ENCODE measurements at regions of chrX and their contacts with region 1.

Region 1: GRCh38 chrX:54044126-54044876 is at the start of gene PHF8:
- DNase-seq: peak; percentile 89 to 97 (median 94)
- ATAC-seq: peak; percentile 84
- H3K4me3 ChIP-seq: peak within 1 kb of the TSS; percentile 75
- H3K4me3 Mint-ChIP-seq: peak within 1 kb of the TSS; percentile 96
- H3K27ac ChIP-seq: peak within 1 kb of the TSS; percentile 89 to 90
- H3K27ac Mint-ChIP-seq: peak within 1 kb of the TSS; percentile 99
- H3K4me1 ChIP-seq: peaks cover 13% of the 10 kb centered on the region
- H3K4me1 Mint-ChIP-seq: peaks cover 29% of the 10 kb centered on the region
- H3K27me3 ChIP-seq: no peaks in the 10 kb centered on the region
- H3K27me3 Mint-ChIP-seq: no peaks in the 10 kb centered on the region
- CTCF ChIP-seq: no peak
- total RNA-seq, gene PHF8: 46.1 to 49.9 TPM

Region 2: GRCh38 chrX:53422086-53422860 is 622.0 kb before region 1 on chrX and contains the start of gene SMC1A:
- CTCF ChIA-PET with region 1: no interaction called
- POLR2A ChIA-PET with region 1: interaction called, 13 read pairs
- intact Hi-C with region 1: no loop called
- DNase-seq: peak; percentile 85 to 99 (median 95)
- ATAC-seq: peak; percentile 87
- H3K4me3 ChIP-seq: peak within 1 kb of the TSS; percentile 93
- H3K4me3 Mint-ChIP-seq: peak within 1 kb of the TSS; percentile 99
- H3K27ac ChIP-seq: peak within 1 kb of the TSS; percentile 90 to 98
- H3K27ac Mint-ChIP-seq: peak within 1 kb of the TSS; percentile 90
- H3K4me1 ChIP-seq: peaks cover 34% of the 10 kb centered on the region
- H3K4me1 Mint-ChIP-seq: peaks cover 28% of the 10 kb centered on the region
- H3K27me3 ChIP-seq: no peaks in the 10 kb centered on the region
- H3K27me3 Mint-ChIP-seq: no peaks in the 10 kb centered on the region
- CTCF ChIP-seq: no peak
- total RNA-seq, gene SMC1A: 25.5 to 28.6 TPM

Region 3: DNA sequence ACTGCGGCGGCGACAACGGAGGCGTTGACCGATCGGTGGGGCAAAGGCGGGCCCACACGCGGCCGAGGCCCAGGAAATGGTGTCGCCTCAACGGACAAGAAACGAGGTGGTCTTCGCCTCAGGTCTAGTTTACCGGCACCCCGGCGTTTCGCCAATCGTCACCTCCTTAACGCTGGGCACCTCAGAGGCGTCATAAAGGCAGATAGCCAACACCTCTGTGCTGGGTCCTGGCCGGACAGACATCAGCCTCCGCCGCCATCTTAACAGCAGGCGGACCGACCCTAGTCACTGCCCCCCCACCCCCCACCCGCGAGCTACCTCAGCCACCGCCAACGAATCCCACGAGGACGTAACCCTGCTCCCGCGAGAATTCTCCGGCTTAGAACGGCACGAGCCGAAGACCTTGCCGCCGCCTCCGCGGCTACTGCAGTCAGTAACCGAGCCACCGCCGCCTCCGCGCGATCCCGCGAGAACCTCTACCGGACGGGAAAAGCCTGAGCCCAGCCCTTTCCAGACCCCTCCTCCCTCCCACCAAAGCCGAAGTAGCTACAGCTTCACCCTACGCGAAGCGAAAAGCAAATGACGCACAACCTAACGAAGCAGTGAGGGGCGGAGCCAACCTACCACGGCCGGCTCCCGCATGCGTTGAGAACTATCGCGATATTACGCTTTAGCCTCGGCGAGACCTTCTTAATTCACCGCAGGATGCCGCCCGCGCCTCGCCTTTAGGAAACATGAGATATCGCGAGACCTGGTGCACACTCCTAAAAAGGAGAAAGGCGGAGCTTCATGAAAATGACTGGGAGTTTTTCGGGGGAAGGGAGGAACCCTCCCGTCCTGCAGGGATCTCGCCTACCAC is 360.5 kb before region 1 on chrX:
- CTCF ChIA-PET with region 1: no interaction called
- POLR2A ChIA-PET with region 1: interaction called, 46 read pairs
- intact Hi-C with region 1: loop called (anchors 1 to 2 kb)
- DNase-seq: peak; percentile 77 to 98 (median 86)
- ATAC-seq: peak; percentile 78
- H3K4me3 ChIP-seq: peak overlapping the region; percentile 90
- H3K4me3 Mint-ChIP-seq: peak overlapping the region; percentile 95
- H3K27ac ChIP-seq: peak overlapping the region; percentile 75 to 98
- H3K27ac Mint-ChIP-seq: peak overlapping the region; percentile 99
- H3K4me1 ChIP-seq: peaks cover 18% of the 10 kb centered on the region
- H3K4me1 Mint-ChIP-seq: peaks cover 63% of the 10 kb centered on the region
- H3K27me3 ChIP-seq: no peaks in the 10 kb centered on the region
- H3K27me3 Mint-ChIP-seq: no peaks in the 10 kb centered on the region
- CTCF ChIP-seq: no peak

Region 4: GRCh38 chrX:53950130-53950733 is 94.1 kb before region 1 on chrX:
- CTCF ChIA-PET with region 1: no interaction called
- POLR2A ChIA-PET with region 1: no interaction called
- intact Hi-C with region 1: no loop called
- DNase-seq: no peak
- ATAC-seq: no peak
- H3K4me3 ChIP-seq: no peak overlapping the region
- H3K4me3 Mint-ChIP-seq: no peak overlapping the region
- H3K27ac ChIP-seq: no peak overlapping the region
- H3K27ac Mint-ChIP-seq: no peak overlapping the region
- H3K4me1 ChIP-seq: no peaks in the 10 kb centered on the region
- H3K4me1 Mint-ChIP-seq: no peaks in the 10 kb centered on the region
- H3K27me3 ChIP-seq: no peaks in the 10 kb centered on the region
- H3K27me3 Mint-ChIP-seq: no peaks in the 10 kb centered on the region
- CTCF ChIP-seq: no peak

Region 5: DNA sequence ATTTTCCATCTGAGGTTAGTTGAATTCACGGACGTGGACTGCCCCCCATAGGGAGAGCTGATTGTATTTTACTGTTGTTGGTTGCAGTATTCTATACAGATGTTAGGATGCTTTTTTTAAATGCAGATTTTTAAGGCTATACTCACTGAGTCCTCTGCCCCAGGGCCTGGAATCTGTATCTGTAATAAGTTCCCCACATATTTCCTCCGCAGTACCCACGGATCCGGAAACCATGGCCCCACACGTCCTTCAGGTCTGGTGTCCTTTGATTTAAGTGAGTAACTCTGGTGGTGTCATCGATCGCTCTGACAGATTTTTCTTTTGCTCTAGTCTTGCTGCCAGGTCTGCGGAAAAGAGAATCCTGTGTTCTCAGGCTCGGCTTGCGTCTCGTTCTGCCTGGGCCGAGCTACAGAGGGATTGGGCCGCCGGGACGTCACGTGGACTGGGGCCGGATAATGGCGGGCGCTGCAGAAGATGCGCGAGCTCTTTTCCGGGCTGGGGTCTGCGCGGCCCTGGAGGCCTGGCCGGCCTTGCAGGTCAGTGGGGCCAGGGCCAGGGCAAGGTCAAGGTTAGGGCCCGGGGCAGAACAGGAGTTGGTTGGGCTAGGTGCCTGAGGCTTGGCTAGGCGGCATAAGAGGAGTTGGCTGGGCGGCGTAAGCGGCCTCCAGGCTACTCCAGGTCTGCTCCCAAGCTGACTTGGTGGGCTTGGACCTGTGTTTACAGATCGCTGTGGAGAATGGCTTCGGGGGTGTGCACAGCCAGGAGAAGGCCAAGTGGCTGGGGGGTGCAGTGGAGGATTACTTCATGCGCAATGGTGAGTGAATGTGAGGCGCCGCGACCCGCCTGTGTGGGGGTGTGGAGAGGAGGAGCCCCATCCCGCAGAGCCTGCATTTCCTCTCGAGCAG is 395.9 kb after region 1 on chrX and contains the start of gene TSR2:
- CTCF ChIA-PET with region 1: no interaction called
- POLR2A ChIA-PET with region 1: interaction called, 11 read pairs
- intact Hi-C with region 1: loop called in 1 of 2 experiments (anchors 5 kb)
- DNase-seq: peak; percentile 58 to 90 (median 68)
- ATAC-seq: peak; percentile 96
- H3K4me3 ChIP-seq: peak within 1 kb of the TSS; percentile 87
- H3K4me3 Mint-ChIP-seq: peak within 1 kb of the TSS; percentile 95
- H3K27ac ChIP-seq: peak within 1 kb of the TSS; percentile 47 to 56
- H3K27ac Mint-ChIP-seq: peak within 1 kb of the TSS; percentile 85
- H3K4me1 ChIP-seq: peaks cover 25% of the 10 kb centered on the region
- H3K4me1 Mint-ChIP-seq: peaks cover 32% of the 10 kb centered on the region
- H3K27me3 ChIP-seq: no peaks in the 10 kb centered on the region
- H3K27me3 Mint-ChIP-seq: no peaks in the 10 kb centered on the region
- CTCF ChIP-seq: no peak
- total RNA-seq, gene TSR2: 36.3 to 36.5 TPM

Region 6: DNA sequence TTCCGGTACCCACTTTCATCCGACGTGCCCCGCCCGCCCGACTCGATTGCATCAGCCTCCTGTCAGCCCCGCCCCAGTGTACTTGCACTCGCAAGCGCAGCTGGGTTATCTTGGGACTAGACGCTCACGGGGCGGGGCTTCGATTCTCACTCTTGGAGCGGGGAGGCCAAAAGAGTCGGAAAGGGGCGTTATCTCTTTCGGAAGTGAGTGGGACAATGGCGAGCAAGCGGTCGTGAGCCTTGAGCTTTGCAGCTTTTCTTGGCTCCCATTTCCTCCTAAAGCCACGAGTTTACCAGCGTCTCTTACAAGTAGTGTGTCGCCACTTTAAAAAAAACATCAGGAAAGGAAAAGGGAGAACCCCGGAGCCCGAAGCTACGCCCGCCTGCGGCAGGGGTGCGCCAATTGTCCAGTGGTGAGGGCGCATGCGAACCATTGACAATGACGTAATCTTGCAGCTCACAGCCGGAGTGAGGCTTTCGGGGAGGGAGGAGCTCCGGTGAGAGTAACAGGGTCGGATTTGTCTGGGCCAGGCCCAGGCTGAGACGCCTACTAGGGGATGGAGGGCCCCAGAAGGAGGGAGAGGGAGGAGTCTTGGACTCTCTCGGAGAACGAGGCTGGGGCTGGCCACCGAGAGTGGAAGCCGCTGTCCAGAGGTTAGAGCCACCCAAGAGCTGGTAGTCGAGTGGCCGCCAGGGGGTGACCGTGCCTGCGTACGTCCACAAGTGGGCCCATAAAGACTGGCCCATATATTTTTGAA is 595.2 kb after region 1 on chrX:
- CTCF ChIA-PET with region 1: no interaction called
- POLR2A ChIA-PET with region 1: interaction called, 41 read pairs
- intact Hi-C with region 1: loop called (anchors 2 kb)
- DNase-seq: peak; percentile 82 to 96 (median 90)
- ATAC-seq: peak; percentile 88
- H3K4me3 ChIP-seq: peak overlapping the region; percentile 60
- H3K4me3 Mint-ChIP-seq: peak overlapping the region; percentile 94
- H3K27ac ChIP-seq: peak overlapping the region; percentile 93 to 95
- H3K27ac Mint-ChIP-seq: peak overlapping the region; percentile 98
- H3K4me1 ChIP-seq: peaks cover 14% of the 10 kb centered on the region
- H3K4me1 Mint-ChIP-seq: peaks cover 14% of the 10 kb centered on the region
- H3K27me3 ChIP-seq: no peaks in the 10 kb centered on the region
- H3K27me3 Mint-ChIP-seq: no peaks in the 10 kb centered on the region
- CTCF ChIP-seq: peak; percentile 47

Region 7: GRCh38 chrX:54999717-55000598 is 955.7 kb after region 1 on chrX and contains the start of gene APEX2:
- CTCF ChIA-PET with region 1: no interaction called
- POLR2A ChIA-PET with region 1: interaction called, 8 read pairs
- intact Hi-C with region 1: loop called in 1 of 2 experiments (anchors 2 kb)
- DNase-seq: peak; percentile 72 to 95 (median 84)
- ATAC-seq: peak; percentile 94
- H3K4me3 ChIP-seq: peak within 1 kb of the TSS; percentile 89
- H3K4me3 Mint-ChIP-seq: peak within 1 kb of the TSS; percentile 96
- H3K27ac ChIP-seq: peak within 1 kb of the TSS; percentile 84 to 97
- H3K27ac Mint-ChIP-seq: peak within 1 kb of the TSS; percentile 97
- H3K4me1 ChIP-seq: peaks cover 20% of the 10 kb centered on the region
- H3K4me1 Mint-ChIP-seq: peaks cover 36% of the 10 kb centered on the region
- H3K27me3 ChIP-seq: no peaks in the 10 kb centered on the region
- H3K27me3 Mint-ChIP-seq: no peaks in the 10 kb centered on the region
- CTCF ChIP-seq: no peak
- total RNA-seq, gene APEX2: 6.4 to 7.2 TPM

Measured in CD4-positive, alpha-beta T cell (primary cell).